PC-9 (cell line): ENCODE measurements at regions of chr2 and their contacts with region 1.

Region 1: DNA sequence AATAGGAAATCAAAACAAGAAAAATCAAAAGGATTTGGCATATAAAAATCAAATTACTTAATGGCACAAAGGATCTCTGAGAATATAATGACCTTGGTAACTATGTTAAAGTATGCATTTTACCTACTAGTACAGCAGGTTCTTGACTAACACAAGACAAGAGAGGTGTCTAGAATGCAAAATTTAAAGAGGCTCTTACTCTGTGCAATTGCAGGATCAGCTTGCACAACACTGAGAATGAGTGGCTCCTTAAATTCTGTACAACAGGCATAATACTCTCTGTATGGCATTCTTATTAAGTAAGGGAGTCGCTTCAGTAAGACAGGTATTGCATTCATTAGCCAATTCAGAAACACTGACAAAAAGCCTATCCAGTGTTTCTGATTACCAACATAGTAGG is 72.6 kb downstream of the UGP2 start:
- DNase-seq: no peak
- H3K4me3 ChIP-seq: no peak overlapping the region
- H3K27ac ChIP-seq: no peak overlapping the region
- H3K4me1 ChIP-seq: no peaks in the 10 kb centered on the region
- H3K27me3 ChIP-seq: no peaks in the 10 kb centered on the region
- CTCF ChIP-seq: no peak

Region 2: DNA sequence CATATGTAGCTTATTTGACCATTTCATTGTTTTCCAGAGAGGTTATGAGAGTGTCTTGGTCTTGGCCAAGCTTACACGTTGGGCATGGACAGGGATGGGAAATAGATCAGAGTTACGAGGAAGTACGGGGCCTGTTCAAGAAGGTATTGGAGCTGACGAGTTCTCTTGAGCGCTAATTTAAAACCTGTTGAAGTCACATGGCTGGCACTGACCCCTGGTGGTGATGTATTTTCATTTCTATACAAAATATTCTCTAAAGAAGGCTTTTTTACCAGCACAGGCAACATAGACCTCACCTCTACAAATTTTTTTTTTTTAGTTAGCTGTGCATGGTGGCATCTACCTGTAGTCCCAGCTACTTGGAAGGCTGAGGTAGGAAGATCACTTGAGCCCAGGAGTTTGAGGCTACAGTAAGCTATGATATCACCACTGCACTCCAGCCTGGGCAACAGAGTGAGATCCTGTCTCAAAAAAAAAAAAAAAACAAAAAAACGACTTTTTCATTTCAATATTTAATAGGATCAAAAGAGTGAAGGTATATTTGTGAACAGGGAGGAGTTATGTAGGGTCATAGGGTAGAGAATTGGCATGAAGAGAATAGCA is 53.0 kb before region 1 on chr2:
- CTCF ChIA-PET with region 1: no interaction called
- POLR2A ChIA-PET with region 1: no interaction called
- intact Hi-C with region 1: no loop called
- DNase-seq: no peak
- H3K4me3 ChIP-seq: no peak overlapping the region
- H3K27ac ChIP-seq: no peak overlapping the region
- H3K4me1 ChIP-seq: peaks cover 18% of the 10 kb centered on the region
- H3K27me3 ChIP-seq: no peaks in the 10 kb centered on the region
- CTCF ChIP-seq: peak; percentile 70

Region 3: GRCh38 chr2:64214281-64215115 is 300.2 kb after region 1 on chr2:
- CTCF ChIA-PET with region 1: no interaction called
- POLR2A ChIA-PET with region 1: interaction called, 15 read pairs
- intact Hi-C with region 1: no loop called
- DNase-seq: peak in 1 of 2 experiments; percentile 62
- H3K4me3 ChIP-seq: no peak overlapping the region
- H3K27ac ChIP-seq: no peak overlapping the region
- H3K4me1 ChIP-seq: peaks cover 48% of the 10 kb centered on the region
- H3K27me3 ChIP-seq: no peaks in the 10 kb centered on the region
- CTCF ChIP-seq: no peak